ENCODE measurements at regions of chr10 and their contacts with region 1.

Region 1: DNA sequence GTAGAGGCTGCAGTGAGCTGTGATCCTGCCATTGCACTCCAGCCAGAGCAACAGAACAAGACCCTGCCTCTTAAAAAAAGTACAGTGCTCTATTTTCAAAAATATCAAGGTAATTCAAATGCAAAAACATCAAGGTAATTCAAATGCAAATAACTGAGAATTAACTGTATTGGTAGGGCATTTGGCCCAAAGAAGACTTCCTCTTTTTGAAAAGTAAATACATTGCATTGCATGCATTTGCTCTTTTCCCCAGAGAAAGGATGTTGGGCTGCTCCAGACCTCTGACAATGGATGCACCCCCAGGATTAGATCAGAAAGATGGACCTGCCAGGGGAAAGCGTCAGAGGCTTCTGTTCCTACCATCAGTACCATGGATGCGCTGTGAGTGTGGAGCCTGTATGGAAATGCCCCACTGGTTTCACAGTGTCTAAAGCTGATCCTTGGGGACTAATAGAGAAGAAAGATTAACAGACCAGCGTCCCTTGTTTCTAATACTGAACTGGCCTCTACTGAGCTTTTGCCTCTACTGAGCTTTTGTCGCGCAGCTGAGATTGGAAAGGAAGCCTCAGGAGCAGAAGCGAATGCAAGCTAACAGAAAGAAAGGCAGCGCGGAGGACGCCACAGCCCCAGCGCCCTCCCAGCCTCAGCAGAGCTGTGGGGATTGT is 93.5 kb upstream of the LYZL2 start:
- DNase-seq: no peak
- ATAC-seq: no peak
- H3K4me3 ChIP-seq: no peak overlapping the region
- H3K4me3 Mint-ChIP-seq: no peak overlapping the region
- H3K27ac ChIP-seq: no peak overlapping the region
- H3K27ac Mint-ChIP-seq: no peak overlapping the region
- H3K4me1 ChIP-seq: peaks cover 7% of the 10 kb centered on the region
- H3K4me1 Mint-ChIP-seq: peaks cover 5% of the 10 kb centered on the region
- H3K27me3 ChIP-seq: no peaks in the 10 kb centered on the region
- H3K27me3 Mint-ChIP-seq: peaks cover 4% of the 10 kb centered on the region
- CTCF ChIP-seq: no peak

Region 2: GRCh38 chr10:30553625-30554439 is 169.3 kb before region 1 on chr10:
- CTCF ChIA-PET with region 1: no interaction called
- POLR2A ChIA-PET with region 1: no interaction called
- intact Hi-C with region 1: no loop called
- DNase-seq: no peak
- ATAC-seq: no peak
- H3K4me3 ChIP-seq: no peak overlapping the region
- H3K4me3 Mint-ChIP-seq: no peak overlapping the region
- H3K27ac ChIP-seq: no peak overlapping the region
- H3K27ac Mint-ChIP-seq: no peak overlapping the region
- H3K4me1 ChIP-seq: no peaks in the 10 kb centered on the region
- H3K4me1 Mint-ChIP-seq: peaks cover 4% of the 10 kb centered on the region
- H3K27me3 ChIP-seq: no peaks in the 10 kb centered on the region
- H3K27me3 Mint-ChIP-seq: no peaks in the 10 kb centered on the region
- CTCF ChIP-seq: no peak

Region 3: GRCh38 chr10:30687698-30688219 is 35.3 kb before region 1 on chr10:
- CTCF ChIA-PET with region 1: interaction called, 43 read pairs
- POLR2A ChIA-PET with region 1: interaction called, 7 read pairs
- intact Hi-C with region 1: loop called (anchors 1 kb)
- DNase-seq: peak; percentile 55 to 90 (median 78)
- ATAC-seq: peak; percentile 79
- H3K4me3 ChIP-seq: no peak overlapping the region
- H3K4me3 Mint-ChIP-seq: no peak overlapping the region
- H3K27ac ChIP-seq: no peak overlapping the region
- H3K27ac Mint-ChIP-seq: no peak overlapping the region
- H3K4me1 ChIP-seq: no peaks in the 10 kb centered on the region
- H3K4me1 Mint-ChIP-seq: no peaks in the 10 kb centered on the region
- H3K27me3 ChIP-seq: peaks cover 4 to 21% of the 10 kb centered on the region in 2 experiments
- H3K27me3 Mint-ChIP-seq: peaks cover 44% of the 10 kb centered on the region
- CTCF ChIP-seq: peak; percentile 99

Region 4: DNA sequence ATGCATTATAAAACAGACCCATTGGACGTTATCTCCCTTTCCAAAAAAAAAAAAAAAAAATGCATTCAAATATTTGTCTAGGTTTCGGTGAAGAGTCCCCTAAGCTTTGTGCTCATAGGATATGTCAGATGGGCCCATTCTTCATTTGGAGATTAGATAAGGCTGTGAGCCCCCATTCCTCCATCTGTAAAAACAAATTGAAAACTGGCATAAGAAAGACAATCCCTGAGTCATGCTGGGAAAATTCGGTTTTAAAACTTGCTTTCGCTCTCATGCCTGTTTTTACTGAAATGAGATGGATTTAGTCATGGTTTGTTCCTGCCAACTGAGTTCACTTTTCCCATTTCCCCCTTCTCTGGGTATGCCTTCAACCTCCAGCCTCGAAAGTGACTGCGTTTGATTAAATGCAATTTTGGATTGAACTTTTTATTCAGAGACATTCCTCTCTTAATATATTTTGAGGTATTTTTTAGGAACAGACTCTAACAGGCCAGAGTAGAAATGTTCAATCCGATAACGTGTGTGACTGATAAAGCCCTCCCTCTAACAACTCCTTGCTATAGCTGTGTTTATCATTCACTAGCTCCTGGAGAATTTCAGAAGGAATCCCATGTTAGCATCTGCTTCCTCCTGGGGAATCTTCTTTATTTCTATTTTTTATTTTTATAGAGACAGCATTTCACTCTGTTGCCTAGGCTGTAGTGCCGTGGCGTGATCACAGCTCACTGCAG is 97.3 kb after region 1 on chr10:
- CTCF ChIA-PET with region 1: no interaction called
- POLR2A ChIA-PET with region 1: no interaction called
- intact Hi-C with region 1: no loop called
- DNase-seq: no peak
- ATAC-seq: no peak
- H3K4me3 ChIP-seq: no peak overlapping the region
- H3K4me3 Mint-ChIP-seq: no peak overlapping the region
- H3K27ac ChIP-seq: no peak overlapping the region
- H3K27ac Mint-ChIP-seq: no peak overlapping the region
- H3K4me1 ChIP-seq: no peaks in the 10 kb centered on the region
- H3K4me1 Mint-ChIP-seq: no peaks in the 10 kb centered on the region
- H3K27me3 ChIP-seq: no peaks in the 10 kb centered on the region
- H3K27me3 Mint-ChIP-seq: no peaks in the 10 kb centered on the region
- CTCF ChIP-seq: no peak

Region 5: DNA sequence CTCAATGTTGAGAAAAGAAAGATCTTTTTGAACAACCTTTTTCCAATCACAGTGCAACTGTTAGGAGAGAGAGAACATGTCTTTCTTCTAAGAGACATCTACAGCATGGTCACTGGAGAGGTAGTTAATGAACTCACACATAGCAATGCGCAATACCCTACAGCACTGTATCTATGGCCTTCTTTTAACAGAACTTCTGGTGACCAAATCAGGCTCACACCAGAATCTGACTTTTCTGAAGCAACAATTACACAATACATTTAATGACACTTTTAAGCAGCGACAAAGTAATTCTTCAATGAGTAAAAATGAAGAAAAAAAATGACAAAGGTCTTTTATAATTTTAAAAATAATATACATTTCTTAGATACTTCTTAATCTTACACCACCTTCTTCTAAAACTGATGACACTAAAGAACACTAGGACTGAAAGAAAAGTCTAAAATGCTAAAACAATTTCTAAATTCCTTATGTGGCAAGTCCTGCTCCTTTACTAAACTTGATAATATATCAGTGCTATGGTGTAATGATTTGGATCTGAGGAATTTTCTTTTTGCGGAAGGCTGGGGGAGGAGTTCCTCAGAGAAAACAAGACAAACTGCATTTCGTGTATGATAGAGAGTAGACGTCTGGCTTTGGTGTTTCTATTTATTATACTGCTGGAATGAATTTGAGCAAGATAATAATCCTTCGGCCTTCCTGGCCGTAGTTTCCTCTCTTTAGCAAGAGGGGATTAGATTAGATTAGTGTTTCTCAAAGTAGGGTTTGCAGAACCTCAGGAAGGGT is 142.2 kb after region 1 on chr10:
- CTCF ChIA-PET with region 1: no interaction called
- POLR2A ChIA-PET with region 1: no interaction called
- intact Hi-C with region 1: no loop called
- DNase-seq: no peak
- ATAC-seq: no peak
- H3K4me3 ChIP-seq: no peak overlapping the region
- H3K4me3 Mint-ChIP-seq: no peak overlapping the region
- H3K27ac ChIP-seq: no peak overlapping the region
- H3K27ac Mint-ChIP-seq: no peak overlapping the region
- H3K4me1 ChIP-seq: no peaks in the 10 kb centered on the region
- H3K4me1 Mint-ChIP-seq: no peaks in the 10 kb centered on the region
- H3K27me3 ChIP-seq: no peaks in the 10 kb centered on the region
- H3K27me3 Mint-ChIP-seq: no peaks in the 10 kb centered on the region
- CTCF ChIP-seq: no peak

Region 6: GRCh38 chr10:31770307-31770902 is 1047.3 kb after region 1 on chr10:
- CTCF ChIA-PET with region 1: interaction called, 3 read pairs
- POLR2A ChIA-PET with region 1: no interaction called
- intact Hi-C with region 1: loop called in 1 of 2 experiments (anchors 1 kb)
- DNase-seq: peak; percentile 43 to 76 (median 54)
- ATAC-seq: peak; percentile 97
- H3K4me3 ChIP-seq: no peak overlapping the region
- H3K4me3 Mint-ChIP-seq: no peak overlapping the region
- H3K27ac ChIP-seq: no peak overlapping the region
- H3K27ac Mint-ChIP-seq: no peak overlapping the region
- H3K4me1 ChIP-seq: no peaks in the 10 kb centered on the region
- H3K4me1 Mint-ChIP-seq: no peaks in the 10 kb centered on the region
- H3K27me3 ChIP-seq: no peaks in the 10 kb centered on the region
- H3K27me3 Mint-ChIP-seq: no peaks in the 10 kb centered on the region
- CTCF ChIP-seq: peak; percentile 89

Region 7: GRCh38 chr10:32005050-32005449 is 1282.0 kb after region 1 on chr10:
- CTCF ChIA-PET with region 1: no interaction called
- POLR2A ChIA-PET with region 1: no interaction called
- intact Hi-C with region 1: loop called in 1 of 2 experiments (anchors 2 kb)
- DNase-seq: peak in 10 of 14 experiments; percentile 2 to 68 (median 34)
- ATAC-seq: peak; percentile 81
- H3K4me3 ChIP-seq: no peak overlapping the region
- H3K4me3 Mint-ChIP-seq: no peak overlapping the region
- H3K27ac ChIP-seq: no peak overlapping the region
- H3K27ac Mint-ChIP-seq: peak overlapping the region; percentile 58
- H3K4me1 ChIP-seq: no peaks in the 10 kb centered on the region
- H3K4me1 Mint-ChIP-seq: peaks cover 16% of the 10 kb centered on the region
- H3K27me3 ChIP-seq: no peaks in the 10 kb centered on the region
- H3K27me3 Mint-ChIP-seq: no peaks in the 10 kb centered on the region
- CTCF ChIP-seq: peak; percentile 67